ENCODE measurements at regions of chr14 and their contacts with region 1.

Region 1: DNA sequence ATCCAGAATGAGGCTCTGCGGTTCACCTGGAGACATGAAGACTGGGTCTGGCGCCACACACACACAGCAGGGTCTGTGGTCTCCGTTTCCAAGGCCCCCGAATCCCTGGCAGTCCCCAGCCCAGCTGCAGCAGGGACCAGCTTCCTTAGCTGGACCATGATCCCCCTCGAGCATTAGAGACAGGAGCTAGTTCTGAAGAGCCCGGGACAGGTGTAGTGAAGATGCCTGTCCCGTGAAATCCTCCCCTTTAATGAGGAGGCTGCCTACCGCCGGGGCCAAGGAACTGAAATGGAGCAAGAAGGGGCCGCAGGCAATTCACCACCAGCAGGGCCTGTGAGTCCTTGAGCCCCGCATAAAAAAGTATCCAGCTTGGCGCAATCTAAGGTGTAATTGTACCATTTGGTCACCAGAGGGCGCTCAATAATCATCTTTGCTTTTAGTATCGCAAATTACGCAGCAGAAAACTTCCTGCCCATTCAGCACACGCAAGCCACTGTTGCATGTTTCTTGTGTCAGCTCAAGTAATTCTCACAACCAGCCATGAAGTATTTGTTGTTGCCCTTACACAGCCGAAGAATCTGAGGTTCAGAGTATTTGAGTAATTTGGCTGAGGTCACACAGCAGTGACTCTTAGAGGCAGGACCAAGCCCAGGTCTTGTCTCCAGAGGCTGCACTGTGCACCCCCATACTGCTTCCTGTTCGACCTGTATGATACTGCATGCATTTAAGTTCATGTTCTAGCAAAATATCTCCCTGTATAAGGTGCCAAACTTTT is 54.3 kb upstream of the PPP2R5C start:
- DNase-seq: peak; percentile 62
- H3K4me3 Mint-ChIP-seq: peak overlapping the region; percentile 0
- H3K27ac Mint-ChIP-seq: peak overlapping the region; percentile 63
- H3K4me1 Mint-ChIP-seq: peaks cover 31% of the 10 kb centered on the region
- H3K27me3 Mint-ChIP-seq: peaks cover 20% of the 10 kb centered on the region

Region 2: GRCh38 chr14:101721951-101722661 is 14.9 kb after region 1 on chr14:
- intact Hi-C with region 1: loop called (anchors 2 kb)
- DNase-seq: peak; percentile 65
- H3K4me3 Mint-ChIP-seq: peak overlapping the region; percentile 77
- H3K27ac Mint-ChIP-seq: peak overlapping the region; percentile 94
- H3K4me1 Mint-ChIP-seq: peaks cover 46% of the 10 kb centered on the region
- H3K27me3 Mint-ChIP-seq: no peaks in the 10 kb centered on the region

Region 3: DNA sequence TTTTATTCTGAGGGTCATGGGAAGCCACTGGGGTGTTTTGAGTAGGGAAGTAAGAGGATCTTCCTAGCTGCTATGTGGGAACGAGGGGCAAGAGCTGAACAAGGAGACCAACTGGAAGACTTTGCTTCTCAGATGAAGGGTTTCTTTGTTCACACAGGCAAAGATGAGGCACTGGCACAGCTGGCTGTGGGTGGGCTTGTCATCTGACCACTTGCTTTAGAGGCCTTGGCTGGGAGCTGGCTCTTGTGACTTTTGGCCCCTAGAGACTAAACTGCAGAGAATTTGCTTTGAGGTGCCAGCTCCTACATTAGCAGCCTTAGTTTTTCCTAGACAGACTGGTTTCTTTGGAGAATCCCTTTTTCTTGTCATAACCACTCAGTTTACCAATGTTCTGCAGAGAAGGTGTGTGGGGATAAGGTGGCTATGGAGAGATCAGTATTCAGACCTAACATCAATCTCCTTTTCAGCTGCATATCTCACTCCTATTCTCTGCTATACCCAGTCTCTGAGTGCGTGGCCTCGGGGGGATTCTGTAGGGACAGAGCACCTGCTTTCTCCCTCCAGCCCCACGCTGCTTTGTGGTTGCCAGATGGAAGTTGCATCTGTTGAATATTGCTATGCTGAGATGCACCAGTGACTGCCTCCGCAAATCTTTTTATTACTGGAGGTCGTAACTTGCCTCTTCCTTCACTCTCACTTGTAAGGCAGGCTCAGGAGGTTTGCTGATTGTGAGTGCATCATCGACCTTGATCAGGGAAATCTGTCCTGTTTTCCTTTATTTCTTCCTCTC is 66.9 kb after region 1 on chr14:
- intact Hi-C with region 1: loop called (anchors 1 kb)
- DNase-seq: no peak
- H3K4me3 Mint-ChIP-seq: no peak overlapping the region
- H3K27ac Mint-ChIP-seq: no peak overlapping the region
- H3K4me1 Mint-ChIP-seq: peaks cover 40% of the 10 kb centered on the region
- H3K27me3 Mint-ChIP-seq: peaks cover 1% of the 10 kb centered on the region

Region 4: DNA sequence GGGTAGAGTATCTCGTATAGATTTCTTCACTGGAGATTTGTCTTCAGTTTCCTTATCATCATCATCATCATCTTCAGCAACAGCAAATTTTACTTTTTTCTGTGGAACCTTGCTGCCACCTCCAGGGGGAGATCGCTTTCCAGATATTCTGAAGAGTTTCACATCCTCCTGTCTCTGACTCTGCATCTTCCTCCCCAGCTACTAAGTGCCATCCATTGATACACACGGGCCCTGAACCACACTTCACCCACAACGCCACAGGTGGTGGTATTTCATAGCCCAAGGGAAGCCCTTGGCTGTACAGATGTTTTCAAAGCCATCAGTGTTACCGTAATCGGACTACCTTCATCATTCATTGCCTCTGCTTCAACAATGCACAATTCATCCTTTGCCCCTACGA is 136.4 kb after region 1 on chr14:
- intact Hi-C with region 1: loop called (anchors 1 kb)
- DNase-seq: peak; percentile 28
- H3K4me3 Mint-ChIP-seq: no peak overlapping the region
- H3K27ac Mint-ChIP-seq: peak overlapping the region; percentile 80
- H3K4me1 Mint-ChIP-seq: peaks cover 80% of the 10 kb centered on the region
- H3K27me3 Mint-ChIP-seq: no peaks in the 10 kb centered on the region

Region 5: DNA sequence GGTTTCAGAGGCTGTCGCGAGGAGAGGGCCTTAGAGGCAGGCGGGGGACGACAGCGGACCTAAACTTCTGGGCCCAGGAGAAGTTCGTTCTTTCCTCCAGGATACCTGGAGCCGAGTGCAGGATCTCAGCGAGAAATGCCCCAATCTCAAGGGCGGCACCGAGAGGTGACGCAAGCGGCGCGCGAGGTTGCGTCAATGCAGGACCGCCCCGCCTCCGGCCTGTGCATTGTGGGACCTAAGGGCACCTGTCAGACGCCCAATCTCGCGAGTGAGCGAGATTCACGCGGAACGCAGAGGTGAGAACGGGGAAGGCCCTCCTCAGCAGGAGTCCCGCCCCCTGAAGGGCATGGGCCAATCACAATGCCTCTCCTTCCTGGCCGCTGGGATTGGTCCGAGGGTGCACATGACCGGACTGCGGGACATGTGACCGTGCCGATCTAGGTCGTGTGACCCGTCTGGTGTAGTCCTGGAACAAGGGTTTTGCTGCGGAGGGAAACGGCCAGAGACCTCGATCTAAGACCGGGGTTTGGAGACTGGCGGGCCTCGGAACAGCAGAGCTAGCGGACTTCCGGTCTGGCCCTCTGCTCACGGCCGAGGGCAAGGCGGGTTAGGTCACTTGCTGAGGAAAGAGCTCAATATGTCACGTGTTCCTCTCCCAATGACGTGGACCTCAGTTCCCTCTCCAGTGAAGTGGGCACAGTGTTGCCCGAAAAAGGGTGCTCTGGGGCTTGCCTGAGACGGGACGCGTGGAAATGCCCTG is 240.8 kb after region 1 on chr14:
- intact Hi-C with region 1: loop called (anchors 1 kb)
- DNase-seq: peak; percentile 100
- H3K4me3 Mint-ChIP-seq: peak overlapping the region; percentile 97
- H3K27ac Mint-ChIP-seq: peak overlapping the region; percentile 97
- H3K4me1 Mint-ChIP-seq: peaks cover 12% of the 10 kb centered on the region
- H3K27me3 Mint-ChIP-seq: peaks cover 15% of the 10 kb centered on the region

Region 6: DNA sequence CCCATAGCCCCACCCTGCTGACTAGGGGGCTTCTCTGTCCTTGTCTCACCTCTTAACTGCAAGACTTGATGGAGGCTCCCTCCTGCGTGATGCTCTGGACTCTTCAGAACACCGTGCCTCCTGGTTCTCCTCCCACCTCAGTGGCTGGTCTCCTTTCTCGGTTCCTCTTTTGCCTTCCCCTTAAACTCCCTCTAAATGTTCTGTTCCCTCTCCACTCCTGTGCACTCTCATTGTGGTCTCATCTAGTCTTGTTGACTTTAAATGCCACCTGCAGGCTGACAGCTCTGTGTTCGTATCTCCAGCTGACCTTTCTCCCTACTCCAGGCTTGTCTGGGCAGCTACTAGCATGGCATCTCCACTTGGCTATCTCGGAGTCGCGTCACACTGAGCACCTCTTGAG is 285.5 kb after region 1 on chr14:
- intact Hi-C with region 1: no loop called
- DNase-seq: no peak
- H3K4me3 Mint-ChIP-seq: no peak overlapping the region
- H3K27ac Mint-ChIP-seq: peak overlapping the region; percentile 65
- H3K4me1 Mint-ChIP-seq: peaks cover 26% of the 10 kb centered on the region
- H3K27me3 Mint-ChIP-seq: no peaks in the 10 kb centered on the region

Region 7: DNA sequence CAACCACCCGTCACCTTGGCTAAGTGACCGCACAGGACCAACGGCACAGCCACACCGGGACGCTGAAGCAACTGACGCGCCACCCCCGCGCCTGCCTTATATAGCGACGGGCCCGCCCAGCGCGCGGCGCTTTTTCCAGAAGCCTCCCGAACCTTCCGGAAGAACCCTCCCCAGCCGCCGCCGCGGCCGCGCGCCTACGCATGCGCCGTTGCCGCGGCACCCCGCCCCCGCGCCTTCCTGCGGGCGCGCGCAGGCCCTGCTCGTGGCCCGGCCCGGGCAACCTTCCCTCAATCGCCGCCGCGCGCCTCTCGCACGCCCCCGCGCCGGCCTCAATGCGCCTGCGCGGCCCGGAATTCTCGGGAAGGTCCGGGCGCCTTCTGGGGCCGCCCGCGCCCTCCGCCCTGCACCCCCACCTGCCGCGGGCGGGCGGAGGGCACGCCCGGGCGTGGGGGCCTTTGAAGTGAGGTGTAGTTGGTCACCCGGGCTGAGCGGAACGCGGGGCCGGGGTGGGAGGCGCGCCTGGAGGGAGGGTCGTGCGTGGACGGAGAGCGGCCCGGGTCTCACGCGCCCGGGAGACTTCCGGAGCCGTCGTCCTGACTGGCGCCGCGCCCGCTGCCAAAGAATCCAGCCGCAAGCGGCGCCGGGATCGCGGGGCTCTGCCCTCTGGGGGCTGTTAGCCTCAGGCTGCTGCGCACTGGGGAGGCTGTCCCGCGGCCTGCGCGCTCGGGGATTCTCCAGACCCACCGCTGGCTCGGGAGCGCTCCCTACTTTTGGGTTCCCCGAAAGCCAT is 379.9 kb after region 1 on chr14 and contains the start of gene HSP90AA1:
- intact Hi-C with region 1: loop called (anchors 2 kb)
- DNase-seq: peak; percentile 94
- H3K4me3 Mint-ChIP-seq: peak within 1 kb of the TSS; percentile 99
- H3K27ac Mint-ChIP-seq: peak within 1 kb of the TSS; percentile 97
- H3K4me1 Mint-ChIP-seq: peaks cover 63% of the 10 kb centered on the region
- H3K27me3 Mint-ChIP-seq: no peaks in the 10 kb centered on the region
- total RNA-seq, gene HSP90AA1: 993 and 995 TPM in 2 replicates

Region 8: DNA sequence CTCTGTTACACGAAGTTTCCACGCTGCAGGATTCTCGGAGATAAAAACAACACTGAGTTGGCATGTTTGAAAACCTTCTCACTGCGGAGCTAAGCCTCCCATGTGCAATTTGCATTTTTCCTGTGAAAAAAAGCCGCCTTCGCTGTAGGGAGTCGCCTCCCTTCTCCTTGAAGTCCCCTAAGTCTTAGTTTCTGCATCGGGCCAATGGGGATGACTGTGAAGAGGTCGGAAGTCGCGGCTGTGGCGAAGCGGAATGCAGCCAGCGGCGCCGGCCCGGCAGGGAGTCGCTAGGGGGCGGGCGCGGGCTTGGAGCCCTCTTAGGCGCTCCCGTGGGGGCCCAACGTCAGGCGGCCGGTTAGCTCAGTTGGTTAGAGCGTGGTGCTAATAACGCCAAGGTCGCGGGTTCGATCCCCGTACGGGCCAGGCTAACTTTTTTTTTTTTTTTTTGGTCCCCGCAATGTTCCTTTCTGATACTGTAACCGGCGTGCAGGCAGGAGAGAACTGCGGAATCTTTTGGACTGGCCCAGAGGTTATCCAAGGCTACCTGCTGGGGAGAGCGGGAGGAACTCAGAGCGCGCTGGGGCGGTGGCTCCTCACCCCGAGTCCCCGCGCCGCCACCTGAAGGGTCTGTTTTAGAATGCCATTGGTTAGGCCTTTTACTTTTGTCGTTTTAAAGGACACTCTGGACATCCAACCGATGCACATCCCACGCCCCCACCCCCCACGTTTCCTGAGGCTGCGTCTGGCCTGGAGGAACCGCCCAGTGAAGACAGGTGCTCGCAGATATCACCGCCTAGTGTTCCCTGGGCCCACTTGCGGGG is 609.7 kb after region 1 on chr14:
- intact Hi-C with region 1: loop called (anchors 5 kb)
- DNase-seq: peak; percentile 94
- H3K4me3 Mint-ChIP-seq: peak overlapping the region; percentile 94
- H3K27ac Mint-ChIP-seq: peak overlapping the region; percentile 92
- H3K4me1 Mint-ChIP-seq: peaks cover 56% of the 10 kb centered on the region
- H3K27me3 Mint-ChIP-seq: peaks cover 3% of the 10 kb centered on the region

Measured in activated T-helper 1 cell treated with anti-CD3 and anti-CD28 coated beads, Interleukin-12 subunit alpha, Interleukin-12 subunit beta, Interleukin-2, Interleukin-4 antibody, amounts not matched to agents 30 ng/mL and 10 ng/mL and 1 ng/mL, durations not matched to agents 14 hours and 24 hours and 36 hours (primary cell).